Heart right ventricle (tissue), 16 donors: ENCODE measurements at regions of chr6 and their contacts with region 1.

Region 1: DNA sequence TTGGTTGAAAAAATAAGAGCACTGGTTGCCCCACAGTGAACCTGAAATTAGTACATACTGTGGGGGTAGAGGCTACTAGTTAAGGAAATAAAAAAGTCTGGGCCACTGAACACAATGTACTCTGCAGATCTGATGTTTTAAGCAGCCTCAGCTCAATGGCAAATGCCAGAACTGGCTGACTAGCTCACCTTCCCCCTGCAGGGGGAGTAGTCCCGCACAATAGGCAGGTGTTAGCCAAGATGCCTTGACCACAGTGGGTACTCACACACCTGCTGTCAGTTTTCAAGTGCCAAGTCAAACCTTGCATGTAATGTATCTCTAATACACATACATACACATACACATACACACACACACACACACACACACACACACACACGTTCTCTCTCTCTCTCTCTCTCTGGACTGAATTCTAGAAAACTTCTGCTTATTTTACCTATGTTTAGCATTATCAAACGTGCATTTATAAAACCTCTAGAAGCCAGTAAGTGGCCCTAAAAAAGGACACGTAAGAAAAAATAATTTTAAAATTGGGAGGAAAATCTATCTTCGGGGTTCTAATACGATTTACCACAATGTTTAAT is 36.1 kb downstream of the GMDS start:
- DNase-seq: peak in 1 of 2 donors; percentile 20
- ATAC-seq: peak in 5 of 8 donors; percentile 27 to 81 (median 57)
- H3K4me3 ChIP-seq: no peak overlapping the region
- H3K27ac ChIP-seq: no peak overlapping the region
- H3K4me1 ChIP-seq: peaks cover 0 to under 1% (median 0%) of the 10 kb centered on the region in 9 donors
- H3K27me3 ChIP-seq: no peaks in the 10 kb centered on the region
- CTCF ChIP-seq: peak in 8 of 9 donors; percentile 13 to 55 (median 43)

Region 2: DNA sequence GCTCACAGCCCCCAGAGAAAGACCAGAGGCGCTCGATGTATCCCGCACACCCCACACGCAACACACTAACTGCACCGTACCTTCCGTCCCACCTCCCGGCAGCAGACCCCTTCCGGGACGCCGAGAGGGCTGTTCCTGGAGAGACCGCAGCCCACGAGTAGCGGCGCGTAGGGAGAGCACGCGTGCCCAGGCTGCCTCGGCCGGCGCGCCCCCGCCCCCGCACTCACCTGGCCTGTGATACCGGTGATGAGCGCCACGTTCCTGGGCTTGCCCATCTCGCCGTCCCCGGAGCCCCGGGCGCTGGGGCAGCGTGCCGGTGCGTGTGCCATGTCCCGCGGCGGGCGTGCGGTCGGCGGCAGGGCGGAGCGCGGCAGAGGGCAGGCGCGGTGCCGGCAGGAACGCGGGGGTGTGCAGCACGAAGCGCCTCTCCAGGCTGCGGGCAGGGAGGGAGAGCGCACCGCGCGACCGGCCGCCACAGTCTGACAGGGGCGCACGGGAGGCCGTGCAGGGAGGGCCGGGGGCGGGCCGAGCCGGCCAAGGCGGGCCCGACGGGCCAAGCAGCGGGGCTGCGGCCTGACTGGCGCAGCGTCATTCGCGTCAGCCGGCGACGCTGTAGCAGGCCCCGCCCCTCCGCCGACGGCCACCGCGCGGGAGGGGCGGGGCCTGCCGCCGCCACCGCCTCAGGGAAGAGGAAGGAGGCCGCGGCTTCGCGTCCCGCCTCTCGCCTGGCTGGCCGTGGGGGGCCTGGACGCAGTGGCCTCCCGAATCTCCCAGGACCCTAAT is 36.0 kb after region 1 on chr6 and contains the start of gene GMDS:
- intact Hi-C with region 1: loop called in 1 of 10 experiments (anchors 2 kb)
- DNase-seq: peak; percentile 86 to 89
- ATAC-seq: peak; percentile 99 to 100 (median 100)
- H3K4me3 ChIP-seq: peak within 1 kb of the TSS; percentile 63 to 98 (median 92)
- H3K27ac ChIP-seq: peak within 1 kb of the TSS; percentile 9 to 98 (median 86)
- H3K4me1 ChIP-seq: peaks cover 2 to 39% (median 19%) of the 10 kb centered on the region in 9 donors
- H3K27me3 ChIP-seq: no peaks in the 10 kb centered on the region
- CTCF ChIP-seq: peak in 1 of 9 donors; percentile 32
- total RNA-seq, gene GMDS: 5.0 to 10.6 (median 6.8) TPM

Region 3: DNA sequence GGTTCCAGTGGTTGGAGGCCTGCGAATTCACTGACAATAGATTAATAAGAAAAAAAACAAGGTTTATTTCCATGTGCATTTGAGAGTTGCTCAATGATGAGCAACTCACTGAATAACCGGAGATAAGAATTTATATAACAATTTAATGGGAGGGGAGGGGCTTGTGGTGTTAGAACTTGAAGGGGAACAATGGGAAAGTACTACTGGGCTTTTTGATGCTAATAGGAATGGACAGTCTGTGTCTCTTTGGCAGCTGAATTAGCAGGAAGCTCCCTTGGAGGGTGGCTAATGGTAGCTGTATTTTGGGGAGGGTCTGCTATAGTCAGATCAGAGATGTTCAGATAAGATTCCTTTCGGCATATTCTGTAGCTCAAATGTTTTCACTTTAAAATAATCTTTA is 98.5 kb after region 1 on chr6:
- intact Hi-C with region 1: no loop called
- DNase-seq: no peak
- ATAC-seq: no peak
- H3K4me3 ChIP-seq: no peak overlapping the region
- H3K27ac ChIP-seq: no peak overlapping the region
- H3K4me1 ChIP-seq: no peaks in the 10 kb centered on the region
- H3K27me3 ChIP-seq: no peaks in the 10 kb centered on the region
- CTCF ChIP-seq: no peak

Region 4: DNA sequence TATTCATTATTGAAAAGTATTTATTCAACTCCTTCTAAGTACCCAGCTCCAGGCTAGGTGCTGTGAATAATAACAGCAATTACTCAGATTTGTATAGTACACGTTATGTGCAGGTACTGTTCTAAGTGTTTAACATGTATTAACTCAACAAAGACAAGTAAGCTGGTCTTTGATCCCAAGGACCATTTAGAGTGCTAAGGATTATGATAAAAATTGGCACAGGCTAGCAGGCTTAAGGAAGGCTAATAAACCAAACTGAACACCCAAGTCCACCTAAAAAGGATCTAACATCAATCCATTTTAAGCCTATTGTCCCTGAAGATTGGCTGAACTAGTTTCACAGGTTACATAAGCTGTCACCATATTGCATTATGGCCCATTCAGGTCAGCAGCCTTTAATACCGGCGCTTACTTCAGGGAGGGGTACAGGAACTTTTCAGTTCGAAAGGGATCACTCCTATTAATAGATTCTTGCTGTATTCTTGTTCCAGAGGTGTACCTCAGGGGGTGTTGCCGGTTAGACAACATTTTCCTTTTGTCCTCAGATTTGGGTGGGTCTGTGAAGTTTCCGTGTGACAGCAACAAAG is 135.1 kb after region 1 on chr6:
- intact Hi-C with region 1: loop called in 1 of 10 experiments (anchors 10 kb)
- DNase-seq: no peak
- ATAC-seq: peak in 2 of 8 donors; percentile 40 to 42
- H3K4me3 ChIP-seq: no peak overlapping the region
- H3K27ac ChIP-seq: no peak overlapping the region
- H3K4me1 ChIP-seq: peaks cover 0 to 19% (median 0%) of the 10 kb centered on the region in 9 donors
- H3K27me3 ChIP-seq: no peaks in the 10 kb centered on the region
- CTCF ChIP-seq: no peak

Region 5: DNA sequence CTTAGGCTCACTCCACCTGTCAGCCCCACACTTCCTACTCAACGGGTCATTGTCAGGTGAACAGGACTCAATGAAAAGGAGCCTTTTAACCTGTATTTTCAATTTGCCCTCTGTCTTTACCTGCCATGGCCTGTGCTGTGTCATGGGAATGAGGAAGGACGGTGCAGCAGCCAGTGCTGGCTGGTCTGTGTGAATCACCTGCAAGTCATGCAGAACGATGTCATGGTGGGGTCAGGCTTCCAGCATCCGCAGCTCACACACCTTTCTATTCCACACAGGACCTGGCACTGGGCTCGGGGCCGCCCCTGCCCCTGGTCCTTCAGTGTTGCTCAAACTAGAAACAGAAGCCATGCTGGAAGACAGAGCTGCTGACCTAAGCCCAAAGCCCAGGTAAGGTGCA is 224.8 kb after region 1 on chr6:
- intact Hi-C with region 1: no loop called
- DNase-seq: no peak
- ATAC-seq: no peak
- H3K4me3 ChIP-seq: no peak overlapping the region
- H3K27ac ChIP-seq: no peak overlapping the region
- H3K4me1 ChIP-seq: no peaks in the 10 kb centered on the region
- H3K27me3 ChIP-seq: no peaks in the 10 kb centered on the region
- CTCF ChIP-seq: no peak